ENCODE measurements at regions of chr13 and their contacts with region 1.

Region 1: DNA sequence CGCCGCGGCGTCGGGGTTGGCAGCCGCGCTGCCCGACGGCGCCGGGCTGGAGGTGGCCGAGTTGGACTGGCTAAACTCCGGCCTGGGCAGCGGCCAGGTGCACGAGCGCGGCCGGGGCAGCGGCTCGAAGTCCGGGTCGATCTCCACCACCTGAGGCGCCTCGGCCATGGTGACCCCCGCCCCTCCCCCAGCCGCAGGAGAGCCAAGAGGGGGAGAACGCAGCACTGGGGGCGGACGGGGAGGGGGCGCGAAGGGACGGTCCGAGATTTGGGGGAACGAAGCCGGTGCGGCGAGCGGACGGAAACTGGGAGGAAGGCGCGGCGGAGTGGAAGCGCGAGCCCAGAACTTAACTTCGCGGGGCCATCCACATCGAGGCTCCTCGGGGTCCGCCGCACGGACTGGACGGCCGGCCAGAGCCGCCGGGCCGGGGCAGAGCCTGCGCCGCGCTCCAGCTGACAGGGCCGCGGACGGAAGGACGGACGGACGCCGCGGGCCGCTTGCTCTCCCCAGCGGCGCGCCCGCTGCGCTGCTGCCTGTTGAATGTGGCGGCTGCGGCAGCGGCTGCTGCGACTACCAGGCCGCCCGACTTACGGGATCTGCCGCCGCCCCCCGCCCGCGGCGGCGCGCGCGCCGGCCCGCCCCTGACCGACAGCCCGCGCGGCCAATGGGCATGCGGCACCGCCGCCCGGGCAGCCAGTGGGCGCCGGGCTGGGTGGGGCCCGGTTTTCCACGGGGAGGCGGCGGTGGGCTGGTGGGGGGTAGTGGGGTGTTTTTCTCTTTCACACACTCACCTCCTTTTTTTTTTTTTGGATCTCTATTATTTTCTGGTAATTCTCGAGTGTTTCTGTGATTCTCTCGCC is at the start of gene FOXO1:
- DNase-seq: peak; percentile 88
- H3K4me3 Mint-ChIP-seq: peak within 1 kb of the TSS; percentile 91
- H3K27ac Mint-ChIP-seq: peak within 1 kb of the TSS; percentile 95
- H3K4me1 Mint-ChIP-seq: peaks cover 45% of the 10 kb centered on the region
- H3K27me3 Mint-ChIP-seq: peaks cover 2% of the 10 kb centered on the region
- total RNA-seq, gene FOXO1: 41.9 and 43.1 TPM in 2 replicates

Region 2: GRCh38 chr13:39422845-39423565 is 1243.3 kb before region 1 on chr13:
- intact Hi-C with region 1: no loop called
- DNase-seq: no peak
- H3K4me3 Mint-ChIP-seq: no peak overlapping the region
- H3K27ac Mint-ChIP-seq: no peak overlapping the region
- H3K4me1 Mint-ChIP-seq: no peaks in the 10 kb centered on the region
- H3K27me3 Mint-ChIP-seq: no peaks in the 10 kb centered on the region

Region 3: GRCh38 chr13:39684531-39685137 is 981.6 kb before region 1 on chr13:
- intact Hi-C with region 1: loop called (anchors 5 kb)
- DNase-seq: no peak
- H3K4me3 Mint-ChIP-seq: no peak overlapping the region
- H3K27ac Mint-ChIP-seq: no peak overlapping the region
- H3K4me1 Mint-ChIP-seq: peaks cover 25% of the 10 kb centered on the region
- H3K27me3 Mint-ChIP-seq: no peaks in the 10 kb centered on the region

Region 4: DNA sequence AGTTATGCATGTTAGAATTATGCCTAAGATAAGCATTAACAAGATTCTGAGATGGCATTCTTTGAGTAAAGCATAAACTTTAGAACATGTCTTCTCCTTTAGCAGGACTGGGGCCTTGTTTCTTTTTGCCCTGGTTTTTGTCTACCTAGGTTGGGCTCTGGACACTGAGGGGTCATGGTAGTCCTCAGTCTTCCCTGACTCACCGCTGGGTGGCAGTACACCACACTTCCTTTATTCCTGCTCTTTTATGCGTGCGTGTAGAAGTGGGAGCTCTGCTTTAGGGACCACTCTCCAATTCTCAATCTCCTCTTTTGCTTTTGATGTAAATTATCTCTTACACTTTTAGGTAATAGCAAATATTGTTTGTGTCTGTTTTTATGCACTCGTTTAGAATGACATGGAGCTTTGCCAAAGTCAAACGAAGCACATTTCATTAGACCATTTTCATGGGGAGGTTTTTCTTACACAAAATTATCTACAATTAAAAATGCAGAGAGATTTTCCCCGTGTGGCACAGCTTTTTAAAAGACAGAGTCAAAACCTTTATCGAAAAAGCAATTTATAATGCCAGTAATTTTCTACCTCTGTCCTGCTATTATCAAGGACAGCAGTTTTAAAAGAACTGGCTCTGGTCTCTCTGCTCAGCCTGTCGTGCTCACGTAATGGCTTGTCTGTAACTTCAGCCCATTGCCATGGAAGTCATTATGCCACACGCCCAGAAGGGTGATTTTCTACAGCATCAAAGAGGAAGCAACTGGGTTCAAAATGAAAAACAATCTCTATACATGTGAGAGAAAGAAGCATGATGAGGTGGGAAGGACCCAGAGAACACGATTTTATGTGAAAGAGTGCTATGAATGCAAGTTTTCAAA is 596.9 kb before region 1 on chr13:
- intact Hi-C with region 1: loop called (anchors 1 kb)
- DNase-seq: peak; percentile 45
- H3K4me3 Mint-ChIP-seq: no peak overlapping the region
- H3K27ac Mint-ChIP-seq: no peak overlapping the region
- H3K4me1 Mint-ChIP-seq: peaks cover 37% of the 10 kb centered on the region
- H3K27me3 Mint-ChIP-seq: no peaks in the 10 kb centered on the region

Region 5: DNA sequence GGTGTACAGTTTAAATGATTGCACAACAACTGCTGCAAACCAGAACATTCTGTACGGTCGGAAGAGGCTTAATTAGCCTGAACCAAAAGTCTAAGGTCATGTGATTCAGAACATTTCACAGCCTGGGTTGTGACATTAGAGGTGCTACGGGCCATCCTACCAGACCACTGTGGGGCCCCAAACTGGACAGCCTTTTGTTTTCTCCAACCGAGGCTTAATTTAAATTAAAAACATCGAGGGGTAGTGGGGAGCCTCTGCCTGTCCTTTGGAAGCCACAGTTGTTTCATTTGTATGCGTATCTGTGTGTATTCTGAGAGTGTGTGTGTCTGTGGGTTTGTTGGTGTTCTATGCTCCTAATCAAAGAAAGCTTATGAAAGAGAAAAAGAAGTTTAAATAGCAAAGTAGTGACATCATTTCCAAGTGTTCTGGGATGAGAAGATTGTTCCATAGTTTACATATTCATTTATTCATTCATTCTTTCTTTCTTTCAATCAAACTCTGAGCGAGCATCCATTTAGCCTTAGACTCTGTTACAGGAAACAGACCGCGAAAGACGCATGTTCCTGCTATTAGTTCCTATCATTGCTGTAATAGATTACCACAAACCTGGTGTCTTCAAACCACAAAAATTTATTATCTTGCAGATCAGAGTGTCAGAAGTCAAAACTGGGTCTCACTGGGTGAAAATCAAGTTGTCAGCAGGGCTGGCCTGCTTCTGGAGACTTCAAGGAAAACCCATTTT is 444.6 kb before region 1 on chr13:
- intact Hi-C with region 1: loop called (anchors 2 kb)
- DNase-seq: no peak
- H3K4me3 Mint-ChIP-seq: peak overlapping the region; percentile 37
- H3K27ac Mint-ChIP-seq: peak overlapping the region; percentile 69
- H3K4me1 Mint-ChIP-seq: peaks cover 43% of the 10 kb centered on the region
- H3K27me3 Mint-ChIP-seq: no peaks in the 10 kb centered on the region

Region 6: DNA sequence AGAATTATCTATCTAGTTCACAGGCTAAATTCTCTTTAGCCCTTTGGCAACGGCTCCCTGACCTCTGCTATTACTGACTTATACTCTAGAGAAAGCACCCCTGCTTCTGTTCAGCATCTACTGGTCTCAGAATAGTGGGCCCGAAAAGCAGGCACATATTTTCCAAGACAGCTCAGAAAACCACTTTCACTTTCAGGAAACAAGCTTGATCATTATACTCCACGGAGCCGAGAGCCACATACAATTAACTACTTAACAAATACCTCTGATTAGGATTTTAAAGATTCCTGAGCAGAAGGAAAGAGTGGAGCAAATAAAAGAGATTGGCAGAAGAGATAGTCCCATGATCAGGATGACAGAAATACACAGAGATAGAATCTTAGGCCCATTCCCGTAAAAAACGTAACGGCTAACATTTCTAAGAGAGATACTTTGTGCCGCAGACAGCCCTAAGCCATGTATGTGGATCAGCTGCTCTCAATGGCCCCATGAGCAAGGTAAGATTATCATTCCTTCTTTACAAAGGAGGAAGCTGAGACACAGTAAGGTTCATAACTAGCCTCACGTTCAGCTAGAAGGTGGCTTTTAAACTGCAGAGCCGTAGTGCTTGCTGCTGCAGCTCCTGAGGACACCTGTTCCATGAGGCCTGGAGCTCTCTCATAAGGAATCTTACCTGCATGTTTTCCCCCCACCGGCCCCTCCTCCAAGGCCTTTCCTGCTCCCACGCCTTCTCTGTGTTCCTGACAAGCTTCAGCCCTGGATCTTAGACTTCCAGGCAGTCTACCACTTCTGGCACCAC is 227.1 kb before region 1 on chr13:
- intact Hi-C with region 1: loop called (anchors 2 kb)
- DNase-seq: no peak
- H3K4me3 Mint-ChIP-seq: peak overlapping the region; percentile 23
- H3K27ac Mint-ChIP-seq: peak overlapping the region; percentile 73
- H3K4me1 Mint-ChIP-seq: peaks cover 33% of the 10 kb centered on the region
- H3K27me3 Mint-ChIP-seq: peaks cover 2% of the 10 kb centered on the region

Region 7: DNA sequence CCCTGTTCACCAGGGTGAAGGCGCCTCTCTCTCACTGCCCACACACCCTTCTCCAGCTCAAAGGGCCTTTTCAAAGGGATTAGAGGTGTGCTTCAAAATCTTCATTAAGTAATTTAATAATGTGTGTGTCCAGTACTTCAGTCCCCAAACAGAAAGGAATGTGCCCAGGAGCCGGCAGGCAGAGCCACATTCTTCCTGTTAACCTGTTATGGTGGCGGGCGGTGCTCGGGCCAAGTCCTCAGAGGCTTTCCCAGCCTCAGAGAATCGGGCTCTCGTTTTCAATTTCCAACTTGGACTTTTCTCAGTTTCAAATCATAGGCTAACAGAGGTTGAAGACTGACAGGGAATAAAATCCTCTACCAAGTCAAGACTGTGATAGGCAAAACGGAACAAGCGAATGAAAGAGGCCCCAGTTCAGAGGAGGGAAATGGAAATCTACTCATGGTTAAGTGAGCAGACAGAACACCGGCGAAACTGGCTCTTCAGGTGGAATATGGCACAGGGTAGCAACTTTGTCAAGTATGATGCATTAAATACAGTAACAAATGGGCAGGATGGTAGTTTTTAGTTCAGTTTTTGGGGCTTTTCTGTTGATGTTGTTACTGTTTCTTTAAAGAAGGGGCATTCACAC is 68.4 kb before region 1 on chr13:
- intact Hi-C with region 1: loop called (anchors 2 kb)
- DNase-seq: no peak
- H3K4me3 Mint-ChIP-seq: peak overlapping the region; percentile 6
- H3K27ac Mint-ChIP-seq: peak overlapping the region; percentile 10
- H3K4me1 Mint-ChIP-seq: peaks cover 75% of the 10 kb centered on the region
- H3K27me3 Mint-ChIP-seq: no peaks in the 10 kb centered on the region

Region 8: DNA sequence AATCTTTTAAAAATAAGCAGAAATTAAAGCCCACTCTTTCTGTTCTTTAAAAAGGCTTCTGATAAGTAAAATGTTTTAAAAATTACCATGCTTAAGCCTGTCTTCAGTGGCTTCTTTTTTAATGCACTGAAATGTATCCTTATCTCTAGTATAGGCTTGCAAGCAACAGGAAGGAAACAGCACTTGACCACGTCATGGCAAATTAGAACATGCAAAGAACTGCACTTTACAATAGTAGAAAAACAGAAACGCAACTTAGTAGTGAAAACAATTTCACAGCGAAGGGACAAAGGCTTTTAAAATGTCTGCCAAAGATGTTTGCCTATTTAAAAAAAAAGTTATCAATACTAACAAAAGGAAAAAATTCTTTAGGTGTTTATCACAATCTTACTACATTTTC is 316.5 kb after region 1 on chr13:
- intact Hi-C with region 1: loop called (anchors 2 kb)
- DNase-seq: peak; percentile 62
- H3K4me3 Mint-ChIP-seq: peak overlapping the region; percentile 91
- H3K27ac Mint-ChIP-seq: peak overlapping the region; percentile 90
- H3K4me1 Mint-ChIP-seq: peaks cover 79% of the 10 kb centered on the region
- H3K27me3 Mint-ChIP-seq: no peaks in the 10 kb centered on the region

Measured in activated T-helper 1 cell treated with anti-CD3 and anti-CD28 coated beads, Interleukin-12 subunit alpha, Interleukin-12 subunit beta, Interleukin-2, Interleukin-4 antibody, amounts not matched to agents 30 ng/mL and 10 ng/mL and 1 ng/mL, durations not matched to agents 14 hours and 24 hours and 36 hours (primary cell).